ENCODE measurements at regions of chr12 and their contacts with region 1.

Region 1: GRCh38 chr12:22856178-22856577 is 231.2 kb downstream of the ETNK1 start:
- DNase-seq: no peak
- H3K4me3 Mint-ChIP-seq: no peak overlapping the region
- H3K27ac Mint-ChIP-seq: no peak overlapping the region
- H3K4me1 Mint-ChIP-seq: no peaks in the 10 kb centered on the region
- H3K27me3 Mint-ChIP-seq: no peaks in the 10 kb centered on the region

Region 2: DNA sequence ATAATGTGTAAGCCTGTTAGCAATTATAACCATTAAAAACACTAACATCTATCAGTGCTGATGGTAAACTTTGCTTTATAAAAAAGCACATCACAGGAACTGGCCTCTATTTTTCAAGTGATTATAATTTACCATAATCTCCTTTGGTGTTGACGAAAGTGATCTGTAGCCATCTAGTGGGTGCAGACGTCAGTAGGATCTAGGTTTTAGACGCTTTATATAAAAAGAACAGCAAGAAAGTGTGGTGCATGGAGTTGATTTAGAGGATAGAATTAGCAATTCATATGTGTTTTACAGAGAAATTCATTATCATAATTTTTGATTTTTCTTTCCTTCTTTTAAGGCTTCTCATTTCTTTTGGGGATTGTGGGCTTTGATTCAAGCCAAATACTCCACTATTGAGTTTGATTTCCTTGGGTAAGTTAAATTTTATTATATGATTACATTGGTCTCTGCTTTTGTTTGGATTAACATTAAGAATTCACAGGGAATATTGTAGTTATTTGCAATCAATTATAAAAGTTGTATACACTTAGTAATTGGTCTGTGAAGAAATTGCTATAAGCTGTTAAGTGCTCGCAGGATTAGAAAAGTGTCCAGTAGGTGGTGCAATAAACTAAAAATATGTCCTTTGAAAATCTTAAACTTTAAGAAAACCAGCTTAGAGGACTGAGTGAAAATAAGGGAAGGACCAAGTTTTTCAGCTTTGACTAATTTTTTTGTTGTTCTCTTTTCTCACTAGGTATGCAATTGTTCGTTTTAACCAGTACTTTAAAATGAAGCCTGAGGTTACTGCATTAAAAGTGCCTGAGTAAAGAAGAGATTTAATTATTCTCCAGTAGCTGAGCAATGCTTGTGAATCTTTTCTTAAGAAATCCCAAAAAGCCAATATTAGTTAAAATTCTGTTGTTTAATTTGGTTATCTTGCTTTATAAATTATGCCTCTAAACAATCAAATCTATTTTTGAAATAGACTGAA is 171.7 kb before region 1 on chr12:
- intact Hi-C with region 1: loop called (anchors 5 kb)
- DNase-seq: no peak
- H3K4me3 Mint-ChIP-seq: no peak overlapping the region
- H3K27ac Mint-ChIP-seq: no peak overlapping the region
- H3K4me1 Mint-ChIP-seq: peaks cover 20% of the 10 kb centered on the region
- H3K27me3 Mint-ChIP-seq: no peaks in the 10 kb centered on the region

Region 3: DNA sequence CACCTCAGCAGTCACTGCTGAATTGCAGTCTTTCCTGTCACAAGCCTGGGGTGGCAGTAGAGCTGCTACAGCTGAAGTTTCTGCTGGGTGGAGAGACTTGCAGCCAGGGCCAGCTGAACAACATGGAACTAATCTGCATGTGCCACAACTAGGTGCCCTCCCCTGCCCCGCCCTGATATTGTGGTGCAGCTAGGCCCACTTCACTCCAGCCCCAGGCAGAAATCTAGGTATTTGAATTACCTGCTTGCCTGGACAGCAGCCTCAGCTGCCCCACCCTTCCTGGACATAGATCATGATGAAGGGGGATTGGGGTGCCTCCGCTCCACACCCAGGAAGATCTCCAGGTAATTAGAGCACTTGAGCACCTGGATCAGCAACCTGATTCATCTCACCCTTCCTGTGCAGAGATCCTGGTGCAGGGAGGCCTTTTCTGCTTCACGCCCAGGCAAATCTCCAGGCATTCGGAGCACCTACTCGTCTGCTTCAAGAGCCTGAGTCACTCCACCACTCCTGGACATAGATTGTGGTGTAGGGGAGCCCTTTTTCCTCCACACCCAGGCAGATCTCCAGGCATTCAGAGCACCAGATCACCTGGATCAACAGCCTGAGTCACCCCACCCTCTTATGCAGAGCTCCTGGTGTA is 616.3 kb after region 1 on chr12:
- intact Hi-C with region 1: no loop called
- DNase-seq: no peak
- H3K4me3 Mint-ChIP-seq: no peak overlapping the region
- H3K27ac Mint-ChIP-seq: no peak overlapping the region
- H3K4me1 Mint-ChIP-seq: no peaks in the 10 kb centered on the region
- H3K27me3 Mint-ChIP-seq: no peaks in the 10 kb centered on the region